Posterior vena cava (tissue), 2 donors: ENCODE measurements at regions of chr6 and their contacts with region 1.

Region 1: DNA sequence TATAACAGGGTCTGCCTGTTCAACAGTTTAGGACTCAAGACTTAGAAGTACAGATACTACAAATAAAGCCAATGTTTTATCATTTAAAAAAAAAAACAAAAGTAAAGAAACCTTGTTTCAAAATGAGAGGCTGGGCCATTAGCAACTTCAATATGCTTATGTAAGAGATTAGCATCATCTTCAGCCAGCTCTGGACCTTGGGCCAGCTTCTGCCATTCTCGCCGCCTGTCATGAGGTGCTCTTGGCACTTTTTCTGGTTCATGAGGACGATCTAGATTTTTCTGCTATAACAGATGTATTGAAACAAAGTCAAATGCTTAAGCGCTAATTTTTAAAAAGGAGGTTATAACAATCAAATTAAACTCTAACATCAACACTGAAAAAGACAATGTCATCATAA is 74.2 kb downstream of the WASF1 start:
- DNase-seq: no peak

Region 2: GRCh38 chr6:110034667-110035036 is 70.6 kb before region 1 on chr6:
- intact Hi-C with region 1: no loop called
- DNase-seq: no peak

Region 3: DNA sequence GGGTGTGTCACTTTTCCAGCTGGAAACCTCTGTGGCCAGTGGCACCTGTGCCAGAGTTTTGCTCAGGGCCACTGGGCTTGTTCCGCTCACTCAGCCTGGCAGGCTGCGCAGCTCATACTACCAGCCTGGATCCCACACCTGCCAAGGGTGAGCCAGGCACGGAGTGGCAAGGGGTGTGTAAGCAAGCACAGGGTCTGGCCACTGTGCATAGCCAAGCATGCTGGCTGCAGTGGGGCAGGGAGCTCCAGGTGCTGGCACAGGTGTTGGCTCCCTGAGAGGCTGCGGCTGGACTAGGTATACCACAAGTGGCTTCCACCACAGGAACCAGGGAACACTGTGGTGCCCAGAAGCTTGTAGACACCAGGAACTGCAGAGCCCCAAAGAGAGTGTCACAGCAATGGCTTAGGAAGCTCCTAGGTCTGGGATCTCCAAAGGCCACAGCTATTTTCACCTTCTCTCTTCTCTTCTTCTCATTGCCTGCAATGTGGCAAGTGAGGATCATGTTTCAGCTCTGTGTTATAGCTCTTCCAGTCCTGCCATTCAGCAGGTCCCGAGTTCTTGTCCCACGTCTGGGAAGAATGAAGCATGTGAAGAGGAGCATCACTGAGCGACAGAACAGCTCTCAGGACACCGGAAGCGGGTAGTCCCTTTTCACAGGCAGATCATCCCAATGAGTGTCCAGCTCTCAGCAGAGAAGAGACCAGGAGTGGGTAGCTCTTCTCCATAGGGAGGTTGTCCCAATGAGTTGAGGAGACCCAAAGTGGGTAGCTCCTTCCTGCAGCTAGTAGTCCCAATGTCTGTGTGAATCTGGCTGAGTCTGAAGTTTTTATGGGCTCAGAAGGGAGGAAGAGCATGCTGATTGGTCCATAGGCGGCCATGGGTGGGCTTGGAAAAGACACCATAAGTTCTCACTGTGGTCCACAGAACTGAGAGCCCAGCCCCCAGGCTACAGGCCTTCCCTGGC is 32.9 kb after region 1 on chr6:
- intact Hi-C with region 1: loop called in 1 of 2 experiments (anchors 1 kb)
- DNase-seq: peak; percentile 56